AG04449 (cell line): ENCODE measurements at regions of chr2 and their contacts with region 1.

Region 1: GRCh38 chr2:37585982-37586621 is 85.3 kb downstream of the CDC42EP3 start:
- DNase-seq: peak; percentile 85
- H3K4me3 ChIP-seq: no peak overlapping the region
- CTCF ChIP-seq: no peak

Region 2: GRCh38 chr2:37623971-37624900 is 38.1 kb after region 1 on chr2:
- CTCF ChIA-PET with region 1: interaction called, 4 read pairs
- POLR2A ChIA-PET with region 1: interaction called, 10 read pairs
- DNase-seq: no peak
- H3K4me3 ChIP-seq: no peak overlapping the region
- CTCF ChIP-seq: no peak